OCI-LY7 (cell line): ENCODE measurements at regions of chr2 and their contacts with region 1.

Region 1: GRCh38 chr2:96320728-96321622 is 4.1 kb upstream of the ITPRIPL1 start:
- DNase-seq: peak; percentile 66
- H3K4me3 ChIP-seq: peak overlapping the region; percentile 70
- H3K27ac ChIP-seq: peak overlapping the region; percentile 41
- H3K4me1 ChIP-seq: peaks cover 61% of the 10 kb centered on the region
- CTCF ChIP-seq: no peak

Region 2: GRCh38 chr2:96065381-96065930 is 255.5 kb before region 1 on chr2:
- CTCF ChIA-PET with region 1: no interaction called
- POLR2A ChIA-PET with region 1: no interaction called
- intact Hi-C with region 1: no loop called
- DNase-seq: no peak
- H3K4me3 ChIP-seq: no peak overlapping the region
- H3K27ac ChIP-seq: no peak overlapping the region
- H3K4me1 ChIP-seq: no peaks in the 10 kb centered on the region
- CTCF ChIP-seq: no peak

Region 3: DNA sequence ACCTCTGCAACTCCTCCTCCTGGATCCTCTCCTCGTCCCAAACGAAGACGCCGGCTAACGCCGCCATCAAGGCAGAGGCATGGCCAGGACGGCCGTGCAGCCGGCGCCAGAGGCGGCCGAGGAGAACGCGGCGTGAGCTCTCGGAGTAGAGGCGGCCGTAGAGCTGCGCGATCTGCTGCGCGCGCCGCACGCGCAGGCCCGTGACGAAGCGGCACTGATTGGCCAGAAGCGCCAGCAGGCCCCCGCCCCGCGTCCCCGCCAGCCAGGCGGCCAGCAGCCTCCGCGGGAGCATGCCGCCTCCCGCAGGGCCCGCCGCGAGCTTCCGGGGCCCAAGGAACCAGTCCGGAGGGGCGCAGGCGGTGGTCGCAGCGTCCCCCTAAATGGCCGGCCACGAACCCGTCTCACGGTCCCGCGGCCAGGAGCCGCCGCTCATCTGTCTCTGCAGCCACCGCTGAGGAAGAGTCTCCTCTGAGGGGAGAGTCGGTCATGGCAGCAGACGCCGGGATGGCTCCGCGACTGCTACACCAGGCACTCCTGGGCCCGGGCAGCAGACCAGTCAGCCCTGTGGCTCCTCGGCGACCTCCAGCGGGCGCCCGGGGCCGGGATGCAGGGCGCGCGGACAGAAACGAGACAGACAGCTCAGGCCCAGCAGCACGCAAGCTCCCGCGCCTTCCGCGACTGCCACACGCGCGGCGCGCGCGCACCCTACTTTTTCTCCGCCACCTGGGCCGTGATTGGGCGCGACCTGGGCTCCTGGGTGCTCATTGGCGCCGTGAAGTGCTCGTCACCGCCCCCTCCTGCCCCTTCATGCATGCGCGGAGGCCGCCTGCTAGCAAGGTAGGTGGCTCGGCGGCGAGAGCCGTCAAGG is 112.6 kb before region 1 on chr2 and contains the start of gene STARD7:
- CTCF ChIA-PET with region 1: no interaction called
- POLR2A ChIA-PET with region 1: no interaction called
- intact Hi-C with region 1: loop called (anchors 5 kb)
- DNase-seq: peak; percentile 99
- H3K4me3 ChIP-seq: peak within 1 kb of the TSS; percentile 90
- H3K27ac ChIP-seq: peak within 1 kb of the TSS; percentile 81
- H3K4me1 ChIP-seq: peaks cover 64% of the 10 kb centered on the region
- CTCF ChIP-seq: peak; percentile 30; the same call in 1 of the 2 replicates
- total RNA-seq, gene STARD7: 208 and 239 TPM in 2 replicates

Region 4: DNA sequence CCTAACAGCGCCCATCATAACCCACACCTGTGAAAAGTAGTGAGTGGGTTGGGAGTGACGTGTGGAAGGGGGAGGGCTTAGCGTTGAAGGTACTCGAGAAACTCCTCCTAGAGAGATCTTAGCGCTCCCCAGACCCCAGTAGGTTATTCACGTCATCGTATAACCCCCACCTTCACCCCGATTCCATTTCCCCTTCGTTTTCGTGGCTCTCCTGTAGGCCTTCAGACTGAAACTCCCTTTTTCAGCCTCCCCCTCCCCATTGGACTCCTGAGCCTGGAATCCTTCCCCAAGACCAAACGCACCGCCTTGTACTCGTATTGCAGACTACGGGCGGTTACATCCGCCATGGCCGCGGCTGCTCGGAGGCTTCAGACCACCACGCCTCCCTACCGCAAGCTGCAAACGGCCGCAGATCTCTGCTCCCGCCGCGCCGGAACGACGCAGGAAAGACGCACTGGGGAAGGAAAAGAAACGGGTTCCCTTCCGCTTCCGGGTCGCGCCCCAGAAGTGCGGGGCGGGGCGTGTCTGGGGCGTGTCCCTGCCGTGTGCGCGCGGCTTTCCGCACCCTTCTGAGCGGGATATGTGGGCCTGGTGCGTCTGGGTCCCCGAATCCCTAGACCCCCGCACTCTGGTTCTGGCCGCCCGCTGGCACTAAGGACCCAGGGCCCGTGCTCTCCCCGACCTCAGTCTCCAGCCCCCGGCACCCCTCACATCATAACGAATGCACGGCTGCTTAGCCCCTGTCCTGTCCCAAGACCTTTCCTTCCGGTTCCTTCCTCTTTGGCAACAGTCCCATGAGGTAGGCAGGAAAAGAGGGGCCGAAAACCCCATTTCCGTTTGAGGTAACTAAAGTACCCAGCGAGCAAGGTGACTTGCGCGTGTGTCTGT is 15.6 kb before region 1 on chr2 and contains the start of gene SNRNP200:
- CTCF ChIA-PET with region 1: no interaction called
- POLR2A ChIA-PET with region 1: interaction called, 31 read pairs
- intact Hi-C with region 1: loop called (anchors 1 kb)
- DNase-seq: peak; percentile 91
- H3K4me3 ChIP-seq: peak within 1 kb of the TSS; percentile 95
- H3K27ac ChIP-seq: peak within 1 kb of the TSS; percentile 73
- H3K4me1 ChIP-seq: peaks cover 28% of the 10 kb centered on the region
- CTCF ChIP-seq: no peak
- total RNA-seq, gene SNRNP200: 76.0 and 79.3 TPM in 2 replicates

Region 5: GRCh38 chr2:96336104-96336775 is 15.3 kb after region 1 on chr2:
- CTCF ChIA-PET with region 1: interaction called, 3 read pairs
- POLR2A ChIA-PET with region 1: interaction called, 39 read pairs
- intact Hi-C with region 1: loop called (anchors 1 kb)
- DNase-seq: peak; percentile 23
- H3K4me3 ChIP-seq: peak overlapping the region; percentile 84
- H3K27ac ChIP-seq: peak overlapping the region; percentile 85
- H3K4me1 ChIP-seq: peaks cover 24% of the 10 kb centered on the region
- CTCF ChIP-seq: no peak

Region 6: DNA sequence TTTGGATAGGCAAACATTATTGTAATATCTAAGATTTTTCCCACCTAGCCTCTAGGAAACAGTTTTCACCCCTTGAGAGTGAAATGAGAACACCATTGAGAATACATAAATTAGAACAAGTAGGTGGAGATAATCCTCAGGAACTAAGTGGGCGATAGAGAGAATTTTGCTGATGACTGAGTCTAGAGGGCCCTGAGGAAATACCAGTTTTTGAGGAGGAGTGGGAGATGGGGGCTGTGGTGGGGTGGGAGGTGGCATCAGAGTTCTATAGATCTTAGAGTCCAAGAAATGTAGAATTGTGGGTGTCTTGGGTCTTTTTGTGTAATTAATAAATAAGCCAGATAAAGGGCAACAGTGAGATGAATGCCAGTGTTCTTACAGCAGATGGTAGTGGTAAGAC is 26.4 kb after region 1 on chr2:
- CTCF ChIA-PET with region 1: no interaction called
- POLR2A ChIA-PET with region 1: no interaction called
- intact Hi-C with region 1: no loop called
- DNase-seq: no peak
- H3K4me3 ChIP-seq: no peak overlapping the region
- H3K27ac ChIP-seq: no peak overlapping the region
- H3K4me1 ChIP-seq: no peaks in the 10 kb centered on the region
- CTCF ChIP-seq: no peak

Region 7: GRCh38 chr2:96359310-96359709 is 38.3 kb after region 1 on chr2:
- CTCF ChIA-PET with region 1: interaction called, 3 read pairs
- POLR2A ChIA-PET with region 1: interaction called, 10 read pairs
- intact Hi-C with region 1: no loop called
- DNase-seq: peak; percentile 9
- H3K4me3 ChIP-seq: no peak overlapping the region
- H3K27ac ChIP-seq: no peak overlapping the region
- H3K4me1 ChIP-seq: no peaks in the 10 kb centered on the region
- CTCF ChIP-seq: peak; percentile 61

Region 8: GRCh38 chr2:96396095-96396494 is 75.1 kb after region 1 on chr2:
- CTCF ChIA-PET with region 1: no interaction called
- POLR2A ChIA-PET with region 1: no interaction called
- intact Hi-C with region 1: no loop called
- DNase-seq: no peak
- H3K4me3 ChIP-seq: no peak overlapping the region
- H3K27ac ChIP-seq: no peak overlapping the region
- H3K4me1 ChIP-seq: no peaks in the 10 kb centered on the region
- CTCF ChIP-seq: no peak